Mammary epithelial cell (primary cell): ENCODE measurements at regions of chr9 and their contacts with region 1.

Region 1: GRCh38 chr9:96566498-96567207 is 53.0 kb downstream of the CDC14B start:
- DNase-seq: peak; percentile 51
- H3K4me3 ChIP-seq: peak overlapping the region; percentile 69 to 96 (median 84)
- H3K27ac ChIP-seq: peak overlapping the region; percentile 35
- H3K4me1 ChIP-seq: peaks cover 16% of the 10 kb centered on the region
- H3K27me3 ChIP-seq: no peaks in the 10 kb centered on the region
- CTCF ChIP-seq: peak; percentile 17 to 69

Region 2: GRCh38 chr9:96338299-96338698 is 228.4 kb before region 1 on chr9:
- CTCF ChIA-PET with region 1: no interaction called
- dilution Hi-C with region 1: no loop called
- in situ Hi-C with region 1: no loop called
- intact Hi-C with region 1: no loop called
- DNase-seq: no peak
- H3K4me3 ChIP-seq: no peak overlapping the region
- H3K27ac ChIP-seq: no peak overlapping the region
- H3K4me1 ChIP-seq: peaks cover 14% of the 10 kb centered on the region
- H3K27me3 ChIP-seq: no peaks in the 10 kb centered on the region
- CTCF ChIP-seq: no peak

Region 3: GRCh38 chr9:96612105-96612965 is 45.7 kb after region 1 on chr9:
- CTCF ChIA-PET with region 1: no interaction called
- dilution Hi-C with region 1: no loop called
- in situ Hi-C with region 1: no loop called
- intact Hi-C with region 1: loop called (anchors 2 kb)
- DNase-seq: peak; percentile 69
- H3K4me3 ChIP-seq: peak overlapping the region in 1 of 3 experiments; percentile 3
- H3K27ac ChIP-seq: no peak overlapping the region
- H3K4me1 ChIP-seq: peaks cover 5% of the 10 kb centered on the region
- H3K27me3 ChIP-seq: no peaks in the 10 kb centered on the region
- CTCF ChIP-seq: no peak